ENCODE measurements at regions of chr9 and their contacts with region 1.

Region 1: GRCh38 chr9:124771021-124771866 is at the start of gene NR6A1:
- DNase-seq: peak; percentile 94
- ATAC-seq: peak; percentile 77
- H3K4me3 ChIP-seq: peak within 1 kb of the TSS; percentile 84
- H3K27ac ChIP-seq: peak within 1 kb of the TSS; percentile 39
- H3K4me1 ChIP-seq: 0 out of 2 replicates have a peak, but pooled peaks cover 4% of the 10 kb centered on the region
- H3K27me3 ChIP-seq: no peaks in the 10 kb centered on the region
- CTCF ChIP-seq: 0 out of 2 replicates have a peak, but pooled peaks have one; percentile 24
- total RNA-seq, gene NR6A1: 0.77 and 1.6 TPM in 2 replicates

Region 2: GRCh38 chr9:124812401-124813016 is 41.3 kb after region 1 on chr9:
- CTCF ChIA-PET with region 1: no interaction called
- POLR2A ChIA-PET with region 1: no interaction called
- intact Hi-C with region 1: loop called (anchors 2 kb)
- DNase-seq: peak; percentile 84
- ATAC-seq: peak; percentile 84
- H3K4me3 ChIP-seq: no peak overlapping the region
- H3K27ac ChIP-seq: peak overlapping the region; percentile 88
- H3K4me1 ChIP-seq: peaks cover 34% of the 10 kb centered on the region
- H3K27me3 ChIP-seq: no peaks in the 10 kb centered on the region
- CTCF ChIP-seq: no peak

Region 3: DNA sequence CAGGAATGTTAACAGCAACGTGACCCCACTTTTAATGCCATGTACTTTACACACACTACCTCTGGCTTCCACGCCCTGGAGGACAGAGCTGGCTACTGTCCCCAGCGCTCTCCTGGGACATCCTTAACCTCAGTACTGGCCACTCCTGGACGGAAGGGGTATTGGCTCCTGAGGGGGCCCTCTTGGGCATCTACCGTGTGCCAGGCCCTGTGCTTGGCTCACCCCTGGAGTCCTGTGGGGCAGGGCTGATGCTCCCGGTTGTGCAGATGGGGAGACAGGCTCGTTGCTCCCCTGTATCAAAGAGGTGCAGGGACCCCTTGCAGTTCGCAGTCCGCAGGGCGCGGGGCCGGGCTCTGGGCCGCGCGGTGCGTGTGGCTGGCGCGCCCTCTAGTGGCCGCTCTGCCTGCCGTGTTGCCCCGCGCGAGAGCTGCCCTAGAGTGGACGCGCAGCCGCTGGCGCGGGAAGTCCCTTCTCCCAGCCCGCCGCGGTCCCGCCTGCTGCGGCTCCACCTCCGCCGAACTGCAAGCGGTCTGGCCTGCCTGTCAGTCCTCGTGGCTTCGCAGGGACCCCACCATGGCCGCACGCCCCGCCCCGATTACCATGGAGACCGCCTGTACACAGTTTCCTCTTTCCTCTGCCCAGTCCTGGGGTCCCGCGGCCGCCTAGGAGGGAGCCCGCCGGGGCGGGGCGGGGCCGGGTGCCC is 81.7 kb after region 1 on chr9 and contains the start of gene WDR38:
- CTCF ChIA-PET with region 1: interaction called, 58 read pairs
- POLR2A ChIA-PET with region 1: no interaction called
- intact Hi-C with region 1: loop called (anchors 1 kb)
- DNase-seq: peak; percentile 74
- ATAC-seq: peak; percentile 84
- H3K4me3 ChIP-seq: peak within 1 kb of the TSS; percentile 72
- H3K27ac ChIP-seq: no peak within 1 kb of the TSS
- H3K4me1 ChIP-seq: no peaks in the 10 kb centered on the region
- H3K27me3 ChIP-seq: no peaks in the 10 kb centered on the region
- CTCF ChIP-seq: peak; percentile 96
- total RNA-seq, gene WDR38: not detected in 2 replicates

Region 4: DNA sequence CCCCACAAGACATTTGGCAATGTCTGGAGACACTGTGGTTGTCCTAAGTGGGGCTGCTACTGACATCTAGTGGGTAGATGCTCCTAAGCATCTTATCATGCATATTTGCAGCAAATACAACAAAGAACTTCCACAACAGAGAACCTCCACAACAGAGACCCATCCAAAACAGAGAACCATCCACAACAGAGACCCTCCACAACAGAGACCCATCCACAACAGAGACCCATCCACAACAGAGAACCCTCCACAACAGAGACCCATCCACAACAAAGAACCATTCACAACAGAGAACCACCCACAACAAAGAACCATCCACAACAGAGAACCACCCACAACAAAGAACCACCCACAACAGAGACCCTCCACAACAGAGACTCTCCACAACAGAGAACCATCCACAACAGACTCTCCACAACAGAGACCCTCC is 123.5 kb after region 1 on chr9:
- CTCF ChIA-PET with region 1: no interaction called
- POLR2A ChIA-PET with region 1: no interaction called
- intact Hi-C with region 1: loop called (anchors 1 kb)
- DNase-seq: peak; percentile 39
- ATAC-seq: peak; percentile 48
- H3K4me3 ChIP-seq: no peak overlapping the region
- H3K27ac ChIP-seq: no peak overlapping the region
- H3K4me1 ChIP-seq: no peaks in the 10 kb centered on the region
- H3K27me3 ChIP-seq: no peaks in the 10 kb centered on the region
- CTCF ChIP-seq: peak; percentile 58

Region 5: DNA sequence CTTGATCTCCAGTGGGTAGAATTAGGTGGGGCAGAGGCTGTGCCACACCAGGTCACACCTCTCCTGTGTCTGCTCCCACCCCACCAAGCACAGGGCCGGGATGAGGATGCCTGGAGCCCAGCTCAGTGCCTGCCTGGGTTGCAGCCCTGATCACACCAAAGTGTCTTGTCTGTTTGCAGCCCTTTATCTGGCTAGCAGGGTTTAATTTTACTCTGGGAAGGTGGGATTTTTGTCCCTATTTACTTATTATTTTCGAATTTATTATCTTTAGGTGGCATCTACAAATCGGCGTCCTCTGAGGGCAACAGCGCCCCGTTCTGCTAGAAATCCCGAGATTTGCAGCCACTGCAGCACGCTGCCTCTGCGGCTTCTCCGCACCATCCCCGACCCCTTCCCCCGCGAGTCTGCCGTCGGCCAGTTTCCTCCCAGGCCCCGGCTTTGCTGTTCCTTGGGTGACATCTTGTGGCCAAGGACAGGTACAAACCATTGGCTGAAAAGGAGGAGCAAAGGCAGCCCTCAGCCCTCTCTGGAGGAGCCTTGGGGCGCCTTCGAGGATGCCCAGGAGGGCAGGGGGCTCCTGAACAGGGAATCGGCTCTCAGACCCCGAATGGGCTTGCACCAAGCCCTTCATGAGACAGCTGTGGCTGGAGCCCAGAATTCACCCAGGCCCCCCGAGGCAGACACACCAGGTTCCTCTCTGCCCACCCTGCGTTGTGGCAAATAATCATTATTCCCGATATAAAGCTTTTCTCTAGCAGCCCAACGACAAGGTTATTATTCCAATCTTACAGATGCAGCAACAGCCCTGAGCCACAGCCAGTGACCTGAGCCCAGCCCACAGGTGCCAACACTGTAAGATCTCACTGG is 603.4 kb after region 1 on chr9:
- CTCF ChIA-PET with region 1: no interaction called
- POLR2A ChIA-PET with region 1: no interaction called
- intact Hi-C with region 1: loop called (anchors 5 kb)
- DNase-seq: peak; percentile 66
- ATAC-seq: peak; percentile 80
- H3K4me3 ChIP-seq: peak overlapping the region; percentile 59
- H3K27ac ChIP-seq: no peak overlapping the region
- H3K4me1 ChIP-seq: no peaks in the 10 kb centered on the region
- H3K27me3 ChIP-seq: no peaks in the 10 kb centered on the region
- CTCF ChIP-seq: peak; percentile 77

Measured in PC-3 (cell line).